ENCODE measurements at regions of chr1 and their contacts with region 1.

Region 1: GRCh38 chr1:221829327-221830015 is 87.6 kb upstream of the DUSP10 start:
- DNase-seq: peak; percentile 73
- H3K4me3 Mint-ChIP-seq: peak overlapping the region; percentile 55
- H3K27ac Mint-ChIP-seq: peak overlapping the region; percentile 95
- H3K4me1 Mint-ChIP-seq: peaks cover 80% of the 10 kb centered on the region
- H3K27me3 Mint-ChIP-seq: no peaks in the 10 kb centered on the region

Region 2: DNA sequence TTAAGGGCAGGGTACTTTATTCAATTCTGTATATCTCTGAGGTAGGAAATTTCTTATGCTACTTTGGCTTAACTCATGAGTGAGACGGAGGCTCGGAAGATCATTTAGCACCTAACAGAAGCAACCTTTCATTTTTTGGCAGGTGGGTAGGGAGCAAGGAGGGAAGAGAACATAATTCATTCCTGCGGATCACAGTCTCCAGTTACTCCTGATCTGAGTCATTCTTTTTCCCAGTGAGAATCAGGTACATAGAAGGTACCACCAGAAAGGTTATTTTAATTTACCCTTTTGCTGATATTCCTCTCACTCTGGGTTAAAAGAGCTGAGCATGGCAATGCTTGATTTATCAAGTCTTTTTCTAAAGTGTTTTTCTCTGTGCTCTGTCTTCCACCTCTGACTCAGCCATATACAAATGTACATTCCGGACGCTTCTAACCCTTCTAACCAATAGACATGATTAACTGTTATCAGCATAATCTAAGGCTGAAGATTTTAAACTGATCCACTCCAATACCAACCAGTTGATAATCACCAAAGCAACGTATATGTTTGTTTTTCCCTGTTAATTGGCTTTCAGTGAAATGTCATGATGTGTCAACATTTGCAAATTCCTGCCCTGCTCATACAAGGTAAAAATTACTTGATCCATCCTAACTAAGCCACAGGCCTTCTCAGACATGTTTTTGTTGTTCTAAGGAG is 359.3 kb before region 1 on chr1:
- CTCF ChIA-PET with region 1: no interaction called
- POLR2A ChIA-PET with region 1: no interaction called
- DNase-seq: no peak
- H3K4me3 Mint-ChIP-seq: no peak overlapping the region
- H3K27ac Mint-ChIP-seq: no peak overlapping the region
- H3K4me1 Mint-ChIP-seq: no peaks in the 10 kb centered on the region
- H3K27me3 Mint-ChIP-seq: peaks cover 10% of the 10 kb centered on the region

Region 3: DNA sequence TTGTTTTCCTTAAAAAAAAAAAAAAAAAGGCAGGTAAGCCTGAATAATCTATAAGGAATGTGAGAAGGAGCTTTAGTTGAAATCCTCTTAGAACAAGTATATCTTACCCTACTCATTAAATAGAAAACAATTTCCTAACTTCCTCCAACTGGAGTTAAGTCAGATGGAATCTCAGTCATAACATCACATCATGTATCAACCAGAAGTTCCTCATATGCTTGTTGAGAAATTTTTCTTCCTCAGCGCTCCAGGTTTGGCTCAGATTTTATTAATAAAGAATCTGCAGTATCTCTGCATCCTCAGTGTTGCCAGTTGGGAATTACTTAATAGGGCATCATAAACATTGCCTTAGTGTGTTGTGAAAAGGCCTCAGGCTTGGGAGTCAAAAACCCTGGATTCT is 125.2 kb before region 1 on chr1:
- CTCF ChIA-PET with region 1: no interaction called
- POLR2A ChIA-PET with region 1: no interaction called
- DNase-seq: no peak
- H3K4me3 Mint-ChIP-seq: no peak overlapping the region
- H3K27ac Mint-ChIP-seq: no peak overlapping the region
- H3K4me1 Mint-ChIP-seq: peaks cover 34% of the 10 kb centered on the region
- H3K27me3 Mint-ChIP-seq: no peaks in the 10 kb centered on the region

Region 4: DNA sequence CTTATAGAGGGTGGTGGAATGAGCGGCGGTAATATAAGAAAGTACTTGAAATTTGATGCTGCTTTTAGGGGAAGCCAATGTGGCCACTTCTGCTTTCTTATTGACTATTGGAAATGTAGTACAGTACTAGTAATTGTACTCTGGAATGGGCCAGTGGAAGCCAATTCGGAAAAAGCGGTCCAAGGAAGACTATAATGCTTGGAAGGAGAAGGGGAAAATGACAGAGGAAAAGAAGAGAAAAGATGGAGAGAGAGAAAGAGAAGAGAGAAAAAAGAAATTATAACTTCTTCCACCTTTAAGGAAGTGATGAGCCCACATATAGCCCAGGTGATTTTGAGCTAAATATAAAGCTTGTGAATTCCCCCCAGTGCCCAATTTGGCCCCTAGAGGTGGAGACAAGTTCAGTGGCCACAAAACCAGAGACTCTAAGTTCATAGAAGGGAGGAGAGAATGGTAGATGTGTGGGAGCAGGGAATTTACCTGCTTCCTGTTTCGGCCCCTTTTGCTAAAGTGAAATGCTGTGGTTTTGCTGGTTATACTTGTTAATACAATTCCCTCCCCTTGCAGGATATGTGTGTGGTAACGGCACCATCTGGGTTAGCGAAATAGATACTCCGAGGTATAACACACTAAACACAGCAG is 51.9 kb before region 1 on chr1:
- CTCF ChIA-PET with region 1: interaction called, 3 read pairs
- POLR2A ChIA-PET with region 1: interaction called, 28 read pairs
- DNase-seq: peak; percentile 67
- H3K4me3 Mint-ChIP-seq: peak overlapping the region; percentile 42
- H3K27ac Mint-ChIP-seq: peak overlapping the region; percentile 91
- H3K4me1 Mint-ChIP-seq: peaks cover 75% of the 10 kb centered on the region
- H3K27me3 Mint-ChIP-seq: no peaks in the 10 kb centered on the region

Region 5: DNA sequence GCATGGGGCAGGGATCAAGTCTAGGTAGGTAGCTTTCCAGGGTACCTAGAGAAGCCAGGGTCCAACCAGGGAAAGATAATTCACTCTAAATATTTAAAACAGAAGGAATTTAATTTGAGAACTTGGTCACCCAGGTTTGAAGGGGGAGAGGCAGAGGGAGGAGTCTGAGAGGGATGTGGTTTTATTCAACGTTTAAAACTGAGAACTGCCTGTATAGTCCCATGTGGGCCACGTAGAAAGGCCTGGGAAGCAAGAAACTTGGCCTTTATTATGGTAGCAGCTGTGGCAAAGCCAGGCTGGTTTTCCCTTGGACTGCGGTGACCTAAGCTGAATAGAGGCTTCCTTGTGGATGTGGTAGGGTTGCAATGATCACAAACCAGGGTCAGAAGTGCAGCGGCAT is 45.5 kb before region 1 on chr1:
- CTCF ChIA-PET with region 1: no interaction called
- POLR2A ChIA-PET with region 1: interaction called, 28 read pairs
- DNase-seq: no peak
- H3K4me3 Mint-ChIP-seq: no peak overlapping the region
- H3K27ac Mint-ChIP-seq: peak overlapping the region; percentile 66
- H3K4me1 Mint-ChIP-seq: peaks cover 57% of the 10 kb centered on the region
- H3K27me3 Mint-ChIP-seq: no peaks in the 10 kb centered on the region

Region 6: GRCh38 chr1:221839796-221840395 is 10.4 kb after region 1 on chr1:
- CTCF ChIA-PET with region 1: interaction called, 3 read pairs
- POLR2A ChIA-PET with region 1: interaction called, 16 read pairs
- DNase-seq: peak; percentile 77
- H3K4me3 Mint-ChIP-seq: no peak overlapping the region
- H3K27ac Mint-ChIP-seq: peak overlapping the region; percentile 71
- H3K4me1 Mint-ChIP-seq: peaks cover 44% of the 10 kb centered on the region
- H3K27me3 Mint-ChIP-seq: no peaks in the 10 kb centered on the region

Region 7: DNA sequence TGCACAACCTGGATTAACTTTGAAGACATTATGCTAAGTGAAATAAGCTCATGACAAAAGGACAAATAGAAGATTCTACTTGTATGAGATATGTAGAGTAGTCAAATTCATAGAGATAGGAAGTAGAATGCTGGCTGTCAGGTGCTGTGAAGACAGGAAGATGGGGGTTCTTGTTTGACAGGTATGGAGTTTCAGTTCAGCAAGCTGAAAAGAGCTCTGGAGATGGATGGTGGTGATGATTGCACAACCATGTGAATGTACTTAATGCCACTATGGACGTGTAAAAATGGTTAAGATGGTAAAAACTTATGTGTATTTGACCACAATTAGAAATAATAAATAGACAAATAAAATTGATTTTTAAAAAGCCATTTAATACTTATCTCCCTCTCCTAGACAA is 82.2 kb after region 1 on chr1:
- CTCF ChIA-PET with region 1: no interaction called
- POLR2A ChIA-PET with region 1: no interaction called
- DNase-seq: no peak
- H3K4me3 Mint-ChIP-seq: no peak overlapping the region
- H3K27ac Mint-ChIP-seq: no peak overlapping the region
- H3K4me1 Mint-ChIP-seq: peaks cover 2% of the 10 kb centered on the region
- H3K27me3 Mint-ChIP-seq: peaks cover 6% of the 10 kb centered on the region

Region 8: DNA sequence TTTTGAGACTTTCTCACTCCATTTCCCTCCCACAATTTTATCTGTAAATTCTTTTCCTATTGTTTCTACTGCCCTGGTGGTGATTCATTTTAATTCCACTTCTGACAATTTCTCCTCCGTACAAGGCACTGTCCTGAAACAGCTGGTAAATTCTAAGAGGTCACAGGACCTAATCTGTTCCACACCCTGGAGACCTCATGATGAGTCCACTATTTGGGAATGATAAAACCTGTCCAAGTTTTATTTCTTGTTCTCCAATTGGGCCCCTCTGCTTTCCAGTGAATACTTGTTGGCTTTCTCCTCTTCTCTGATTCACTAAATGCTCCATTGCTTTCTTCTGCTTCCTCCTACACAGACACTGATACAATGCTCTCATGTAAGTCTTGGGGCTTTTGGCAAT is 255.5 kb after region 1 on chr1:
- CTCF ChIA-PET with region 1: no interaction called
- POLR2A ChIA-PET with region 1: no interaction called
- DNase-seq: no peak
- H3K4me3 Mint-ChIP-seq: no peak overlapping the region
- H3K27ac Mint-ChIP-seq: no peak overlapping the region
- H3K4me1 Mint-ChIP-seq: no peaks in the 10 kb centered on the region
- H3K27me3 Mint-ChIP-seq: peaks cover 1% of the 10 kb centered on the region